GM13976 (cell line): ENCODE measurements at regions of chr19 and their contacts with region 1.

Region 1: GRCh38 chr19:37914908-37915307 is 7.9 kb downstream of the SIPA1L3 start:
- DNase-seq: peak; percentile 58
- CTCF ChIP-seq: no peak

Region 2: GRCh38 chr19:37691881-37692504 is 222.9 kb before region 1 on chr19:
- in situ Hi-C with region 1: no loop called
- DNase-seq: peak; percentile 77
- CTCF ChIP-seq: no peak

Region 3: GRCh38 chr19:38049105-38049649 is 134.3 kb after region 1 on chr19:
- in situ Hi-C with region 1: loop called (anchors 10 kb)
- DNase-seq: peak; percentile 80
- CTCF ChIP-seq: no peak